Activated CD4-positive, alpha-beta T cell treated with anti-CD3 and anti-CD28 coated beads for 36 hours (primary cell): ENCODE measurements at regions of chr1 and their contacts with region 1.

Region 1: GRCh38 chr1:204417231-204417997 is 5.8 kb upstream of the PPP1R15B start:
- DNase-seq: peak; percentile 64
- ATAC-seq: peak; percentile 91
- H3K4me3 Mint-ChIP-seq: no peak overlapping the region
- H3K27ac Mint-ChIP-seq: peak overlapping the region; percentile 79
- H3K4me1 Mint-ChIP-seq: peaks cover 36% of the 10 kb centered on the region
- H3K27me3 Mint-ChIP-seq: no peaks in the 10 kb centered on the region

Region 2: DNA sequence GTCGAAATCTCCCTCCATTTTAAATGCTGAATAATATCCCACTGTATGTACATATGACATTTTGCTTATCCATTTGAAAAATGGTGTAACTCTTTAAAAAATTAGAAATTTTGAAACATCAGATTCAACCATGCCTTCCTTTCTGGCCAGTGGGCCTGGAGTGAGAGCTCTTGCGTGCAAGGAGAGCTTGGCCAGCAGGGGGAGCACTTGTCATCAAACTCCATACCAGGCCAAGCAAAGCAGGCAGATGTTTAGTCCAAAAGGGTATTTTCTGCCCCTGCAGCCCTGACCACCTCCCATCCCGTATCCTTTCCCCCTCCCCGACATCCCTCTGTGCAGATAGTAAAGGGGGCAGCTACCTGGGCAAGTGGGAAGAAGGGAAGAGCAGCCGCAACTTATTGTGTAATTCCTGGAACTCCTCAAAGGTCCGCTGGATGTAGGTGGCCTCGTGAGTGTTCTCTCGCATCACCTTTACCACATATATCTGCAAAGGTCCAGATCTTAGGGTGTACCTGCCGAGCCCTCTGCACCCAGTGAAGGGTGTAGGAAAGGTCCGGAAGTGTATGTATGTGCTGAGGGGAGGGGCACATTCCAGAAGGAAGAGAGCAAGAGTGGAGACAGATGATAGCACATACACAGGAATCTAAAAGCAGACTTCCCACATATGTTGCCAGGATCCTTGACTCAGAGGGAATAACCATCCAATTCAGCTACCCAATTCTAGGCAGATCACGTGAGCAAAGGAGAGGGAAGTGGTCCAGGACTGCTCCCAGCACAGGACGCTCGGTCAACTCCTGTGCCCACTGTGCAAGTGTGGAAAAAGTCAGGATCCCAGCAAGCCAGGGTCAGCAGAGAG is 14.1 kb after region 1 on chr1:
- CTCF ChIA-PET with region 1: interaction called, 31 read pairs
- POLR2A ChIA-PET with region 1: no interaction called
- intact Hi-C with region 1: no loop called
- DNase-seq: peak; percentile 91
- ATAC-seq: peak; percentile 85
- H3K4me3 Mint-ChIP-seq: no peak overlapping the region
- H3K27ac Mint-ChIP-seq: peak overlapping the region; percentile 45
- H3K4me1 Mint-ChIP-seq: peaks cover 10% of the 10 kb centered on the region
- H3K27me3 Mint-ChIP-seq: no peaks in the 10 kb centered on the region

Region 3: DNA sequence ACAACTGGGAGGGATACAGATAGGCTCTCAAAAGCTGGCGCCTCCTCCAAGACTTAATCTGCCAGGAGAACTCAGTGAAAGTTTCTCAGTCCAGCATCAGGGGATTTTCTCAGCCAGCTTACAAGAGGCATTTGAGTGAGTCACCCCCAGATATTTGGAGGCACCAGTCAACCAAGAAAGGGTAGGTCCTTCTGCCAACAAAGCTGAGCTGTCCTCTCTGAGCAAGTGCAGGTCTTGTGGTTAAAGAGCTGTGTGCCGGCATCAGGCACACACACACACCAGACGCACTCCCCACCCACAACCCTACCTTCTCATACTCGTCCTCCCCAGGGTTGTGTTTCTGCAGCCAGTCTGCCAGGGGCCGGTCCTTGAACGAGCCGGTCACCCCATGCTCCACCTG is 21.2 kb after region 1 on chr1:
- CTCF ChIA-PET with region 1: interaction called, 31 read pairs
- POLR2A ChIA-PET with region 1: no interaction called
- intact Hi-C with region 1: loop called in 1 of 2 experiments (anchors 2 kb)
- DNase-seq: peak; percentile 60
- ATAC-seq: peak; percentile 92
- H3K4me3 Mint-ChIP-seq: no peak overlapping the region
- H3K27ac Mint-ChIP-seq: peak overlapping the region; percentile 58
- H3K4me1 Mint-ChIP-seq: peaks cover 22% of the 10 kb centered on the region
- H3K27me3 Mint-ChIP-seq: no peaks in the 10 kb centered on the region